Activated CD4-positive, alpha-beta memory T cell treated with anti-CD3 and anti-CD28 coated beads, Interleukin-2, amount 10 ng/mL, durations not matched to agents 7 days and 5 days (primary cell): ENCODE measurements at regions of chr18 and their contacts with region 1.

Region 1: DNA sequence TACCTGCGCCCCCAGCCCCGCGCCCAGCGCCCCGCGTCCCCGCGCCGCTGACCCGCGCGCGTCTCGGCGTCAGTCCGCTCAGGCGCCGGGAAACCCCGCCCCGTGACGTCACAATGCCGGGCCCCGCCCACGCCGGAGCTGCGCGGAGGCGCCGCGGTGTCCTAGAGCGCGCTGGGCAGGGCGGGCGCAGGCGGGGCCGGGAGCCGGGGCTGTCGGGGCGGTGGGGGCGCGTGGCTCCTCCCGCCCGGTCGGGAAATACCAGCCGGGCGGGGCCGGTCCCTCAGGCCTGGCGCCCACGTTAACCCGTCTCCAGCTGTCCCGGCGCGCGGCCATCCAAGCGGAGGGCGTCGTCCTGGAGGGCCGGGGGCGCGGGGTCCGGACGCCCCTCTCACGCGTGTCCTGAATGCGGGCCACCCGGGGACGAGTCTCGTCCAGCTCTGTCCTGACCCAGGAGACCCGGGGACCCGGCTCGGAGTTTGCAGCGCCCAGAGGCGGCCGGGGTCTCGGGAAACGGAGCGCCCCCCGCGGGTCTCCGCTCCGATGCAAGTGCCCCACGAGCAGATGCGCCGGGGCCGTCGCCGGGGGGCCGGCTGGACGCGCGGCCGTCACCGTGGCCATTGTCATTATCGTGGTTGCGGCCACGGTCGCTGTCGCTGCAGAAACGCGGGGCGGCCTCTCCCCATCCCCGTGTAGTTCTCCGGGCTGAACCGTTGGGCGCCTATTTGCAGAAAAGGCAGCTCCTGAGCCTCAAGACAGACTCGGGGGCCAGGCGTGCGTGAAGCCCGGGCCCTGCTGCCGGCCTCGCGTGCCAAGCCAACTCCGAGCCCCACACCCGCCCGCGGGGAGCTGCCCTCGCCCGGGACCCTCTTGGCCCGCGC is at the start of gene SLC66A2:
- DNase-seq: peak; percentile 94
- H3K4me3 Mint-ChIP-seq: peak within 1 kb of the TSS; percentile 82
- H3K27ac Mint-ChIP-seq: peak within 1 kb of the TSS; percentile 42
- H3K4me1 Mint-ChIP-seq: peaks cover 23% of the 10 kb centered on the region
- H3K27me3 Mint-ChIP-seq: peaks cover 15% of the 10 kb centered on the region
- total RNA-seq, gene SLC66A2: 28.6 to 32.0 TPM

Region 2: GRCh38 chr18:79679111-79679872 is 272.5 kb before region 1 on chr18 and contains the start of gene CTDP1:
- CTCF ChIA-PET with region 1: no interaction called
- POLR2A ChIA-PET with region 1: interaction called, 12 read pairs
- DNase-seq: peak; percentile 99
- H3K4me3 Mint-ChIP-seq: peak within 1 kb of the TSS; percentile 94
- H3K27ac Mint-ChIP-seq: peak within 1 kb of the TSS; percentile 96
- H3K4me1 Mint-ChIP-seq: peaks cover 53% of the 10 kb centered on the region
- H3K27me3 Mint-ChIP-seq: no peaks in the 10 kb centered on the region
- total RNA-seq, gene CTDP1: 34.8 to 38.0 TPM

Region 3: GRCh38 chr18:79964330-79965118 is 12.7 kb after region 1 on chr18 and contains the start of gene HSBP1L1:
- CTCF ChIA-PET with region 1: interaction called, 3 read pairs
- POLR2A ChIA-PET with region 1: interaction called, 34 read pairs
- DNase-seq: peak; percentile 68
- H3K4me3 Mint-ChIP-seq: peak within 1 kb of the TSS; percentile 69
- H3K27ac Mint-ChIP-seq: peak within 1 kb of the TSS; percentile 76
- H3K4me1 Mint-ChIP-seq: peaks cover 50% of the 10 kb centered on the region
- H3K27me3 Mint-ChIP-seq: peaks cover 6% of the 10 kb centered on the region
- total RNA-seq, gene HSBP1L1: 9.0 to 9.2 TPM